ENCODE measurements at regions of chrX and their contacts with region 1.

Region 1: DNA sequence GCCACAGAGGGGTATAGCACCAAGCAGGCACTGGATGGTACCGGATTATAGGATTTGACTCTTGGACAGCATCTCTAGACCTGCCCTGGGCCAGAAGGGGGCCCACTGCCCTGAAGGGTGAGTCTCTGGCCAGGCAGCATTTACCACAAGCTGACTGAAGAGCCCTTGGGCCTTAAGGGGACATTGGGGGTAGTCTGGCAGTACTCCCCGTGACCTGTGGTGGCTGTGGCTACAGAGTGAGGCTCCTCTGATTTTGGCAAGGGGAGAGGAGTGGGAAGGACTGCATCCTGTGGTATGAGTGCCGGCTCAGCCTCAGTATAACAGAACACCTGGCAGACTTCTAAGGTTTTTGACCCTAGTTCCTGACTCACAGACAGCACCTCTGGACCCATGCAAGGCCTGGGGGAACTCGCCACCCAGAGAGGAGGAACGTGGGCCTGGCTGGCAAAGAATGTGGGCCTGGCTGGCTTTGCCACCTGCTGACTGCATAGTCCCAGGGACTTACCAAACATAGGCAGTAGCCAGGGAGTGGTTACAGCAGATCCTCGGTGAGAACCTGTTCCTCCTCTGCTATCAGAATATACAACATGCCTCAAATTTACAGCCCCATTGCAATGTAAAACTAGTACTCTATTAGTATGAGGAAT is 48.1 kb downstream of the ABCB7 start:
- DNase-seq: no peak
- H3K4me3 ChIP-seq: no peak overlapping the region
- H3K27ac ChIP-seq: no peak overlapping the region
- H3K4me1 ChIP-seq: no peaks in the 10 kb centered on the region
- CTCF ChIP-seq: no peak

Region 2: GRCh38 chrX:74940414-74940813 is 167.6 kb before region 1 on chrX:
- CTCF ChIA-PET with region 1: no interaction called
- POLR2A ChIA-PET with region 1: no interaction called
- intact Hi-C with region 1: no loop called
- DNase-seq: no peak
- H3K4me3 ChIP-seq: no peak overlapping the region
- H3K27ac ChIP-seq: no peak overlapping the region
- H3K4me1 ChIP-seq: no peaks in the 10 kb centered on the region
- CTCF ChIP-seq: no peak

Region 3: GRCh38 chrX:75149654-75150053 is 41.7 kb after region 1 on chrX:
- CTCF ChIA-PET with region 1: no interaction called
- POLR2A ChIA-PET with region 1: no interaction called
- intact Hi-C with region 1: loop called (anchors 5 kb)
- DNase-seq: no peak
- H3K4me3 ChIP-seq: no peak overlapping the region
- H3K27ac ChIP-seq: no peak overlapping the region
- H3K4me1 ChIP-seq: peaks cover 4% of the 10 kb centered on the region
- CTCF ChIP-seq: no peak

Region 4: GRCh38 chrX:75181721-75182120 is 73.7 kb after region 1 on chrX:
- CTCF ChIA-PET with region 1: no interaction called
- POLR2A ChIA-PET with region 1: no interaction called
- intact Hi-C with region 1: no loop called
- DNase-seq: no peak
- H3K4me3 ChIP-seq: no peak overlapping the region
- H3K27ac ChIP-seq: no peak overlapping the region
- H3K4me1 ChIP-seq: no peaks in the 10 kb centered on the region
- CTCF ChIP-seq: no peak